Sigmoid colon (tissue), 7 donors: ENCODE measurements at regions of chr2 and their contacts with region 1.

Region 1: GRCh38 chr2:29196792-29197788 is 81.9 kb downstream of the CLIP4 start:
- DNase-seq: no peak
- H3K4me3 ChIP-seq: no peak overlapping the region
- H3K27ac ChIP-seq: no peak overlapping the region
- H3K4me1 ChIP-seq: peaks cover 0 to 8% (median 0%) of the 10 kb centered on the region in 4 donors
- H3K27me3 ChIP-seq: no peaks in the 10 kb centered on the region
- CTCF ChIP-seq: peak; percentile 42 to 79 (median 74)
- EP300 ChIP-seq: no peak
- POLR2A ChIP-seq: no peak

Region 2: GRCh38 chr2:28915939-28916338 is 281.2 kb before region 1 on chr2:
- intact Hi-C with region 1: no loop called
- DNase-seq: no peak
- H3K4me3 ChIP-seq: no peak overlapping the region
- H3K27ac ChIP-seq: no peak overlapping the region
- H3K4me1 ChIP-seq: no peaks in the 10 kb centered on the region
- H3K27me3 ChIP-seq: no peaks in the 10 kb centered on the region
- CTCF ChIP-seq: no peak
- EP300 ChIP-seq: no peak
- POLR2A ChIP-seq: no peak

Region 3: GRCh38 chr2:29024882-29025430 is 172.1 kb before region 1 on chr2:
- intact Hi-C with region 1: no loop called
- DNase-seq: no peak
- H3K4me3 ChIP-seq: no peak overlapping the region
- H3K27ac ChIP-seq: no peak overlapping the region
- H3K4me1 ChIP-seq: no peaks in the 10 kb centered on the region
- H3K27me3 ChIP-seq: no peaks in the 10 kb centered on the region
- CTCF ChIP-seq: no peak
- EP300 ChIP-seq: no peak
- POLR2A ChIP-seq: no peak

Region 4: GRCh38 chr2:29063646-29064343 is 133.3 kb before region 1 on chr2:
- intact Hi-C with region 1: loop called (anchors 5 kb)
- DNase-seq: no peak
- H3K4me3 ChIP-seq: peak overlapping the region; percentile 9 to 31 (median 12)
- H3K27ac ChIP-seq: peak overlapping the region; percentile 30 to 79 (median 75)
- H3K4me1 ChIP-seq: peaks cover 0 to 38% (median 35%) of the 10 kb centered on the region in 4 donors
- H3K27me3 ChIP-seq: no peaks in the 10 kb centered on the region
- CTCF ChIP-seq: no peak
- EP300 ChIP-seq: no peak
- POLR2A ChIP-seq: no peak

Region 5: DNA sequence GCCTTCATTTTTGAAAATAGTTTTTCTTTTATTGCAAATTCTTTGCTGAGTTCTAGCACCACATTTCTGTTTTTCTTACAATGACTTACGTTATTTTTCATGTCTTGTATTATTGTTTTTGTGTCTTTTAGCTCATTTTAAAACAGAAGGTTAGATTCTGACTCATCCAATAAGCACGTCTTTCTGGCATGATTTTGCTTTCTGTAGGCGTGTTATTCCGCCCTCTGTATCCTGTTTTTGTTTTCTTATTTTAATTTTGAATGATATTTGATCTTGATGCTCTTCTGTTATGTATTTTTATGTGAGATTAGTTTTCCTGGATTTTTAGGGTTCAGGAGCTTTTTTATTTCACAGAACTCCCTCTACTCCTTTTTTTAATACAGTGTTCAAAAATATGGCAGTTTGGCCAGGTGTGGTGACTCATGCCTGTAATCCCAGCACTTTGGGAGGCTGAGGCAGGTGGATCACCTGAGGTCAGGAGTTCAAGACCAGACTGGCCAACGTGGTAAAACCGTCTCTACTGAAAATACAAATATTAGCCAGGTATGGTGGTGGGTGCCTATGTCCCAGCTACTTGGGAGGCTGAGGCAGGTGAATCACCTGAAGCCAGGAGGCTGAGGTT is 63.2 kb after region 1 on chr2:
- intact Hi-C with region 1: no loop called
- DNase-seq: peak; percentile 18
- H3K4me3 ChIP-seq: no peak overlapping the region
- H3K27ac ChIP-seq: no peak overlapping the region
- H3K4me1 ChIP-seq: no peaks in the 10 kb centered on the region
- H3K27me3 ChIP-seq: no peaks in the 10 kb centered on the region
- CTCF ChIP-seq: no peak
- EP300 ChIP-seq: no peak
- POLR2A ChIP-seq: no peak